Esophagus muscularis mucosa (tissue), 4 donors: ENCODE measurements at regions of chr9 and their contacts with region 1.

Region 1: GRCh38 chr9:694403-695154 is 146.9 kb upstream of the DMRT1 start:
- DNase-seq: no peak
- H3K4me3 ChIP-seq: peak overlapping the region; percentile 39 to 64 (median 47)
- H3K27ac ChIP-seq: peak overlapping the region; percentile 88 to 89 (median 89)
- H3K4me1 ChIP-seq: peaks cover 61 to 94% (median 83%) of the 10 kb centered on the region in 4 donors
- H3K27me3 ChIP-seq: no peaks in the 10 kb centered on the region
- CTCF ChIP-seq: no peak
- EP300 ChIP-seq: peak; percentile 30
- POLR2A ChIP-seq: no peak

Region 2: GRCh38 chr9:738209-738915 is 43.8 kb after region 1 on chr9:
- intact Hi-C with region 1: loop called (anchors 5 kb)
- DNase-seq: no peak
- H3K4me3 ChIP-seq: no peak overlapping the region
- H3K27ac ChIP-seq: peak overlapping the region; percentile 80 to 90 (median 88)
- H3K4me1 ChIP-seq: peaks cover 48 to 83% (median 70%) of the 10 kb centered on the region in 4 donors
- H3K27me3 ChIP-seq: no peaks in the 10 kb centered on the region
- CTCF ChIP-seq: no peak
- EP300 ChIP-seq: no peak
- POLR2A ChIP-seq: no peak